Psoas muscle (tissue), 8 donors: ENCODE measurements at regions of chr10 and their contacts with region 1.

Region 1: GRCh38 chr10:52050429-52051047 is 263.5 kb upstream of the DKK1 start:
- DNase-seq: no peak
- ATAC-seq: peak in 3 of 4 donors; percentile 27 to 42 (median 30)
- H3K4me3 ChIP-seq: no peak overlapping the region
- H3K27ac ChIP-seq: no peak overlapping the region
- H3K4me1 ChIP-seq: peaks cover 16% of the 10 kb centered on the region
- H3K27me3 ChIP-seq: no peaks in the 10 kb centered on the region
- CTCF ChIP-seq: no peak

Region 2: DNA sequence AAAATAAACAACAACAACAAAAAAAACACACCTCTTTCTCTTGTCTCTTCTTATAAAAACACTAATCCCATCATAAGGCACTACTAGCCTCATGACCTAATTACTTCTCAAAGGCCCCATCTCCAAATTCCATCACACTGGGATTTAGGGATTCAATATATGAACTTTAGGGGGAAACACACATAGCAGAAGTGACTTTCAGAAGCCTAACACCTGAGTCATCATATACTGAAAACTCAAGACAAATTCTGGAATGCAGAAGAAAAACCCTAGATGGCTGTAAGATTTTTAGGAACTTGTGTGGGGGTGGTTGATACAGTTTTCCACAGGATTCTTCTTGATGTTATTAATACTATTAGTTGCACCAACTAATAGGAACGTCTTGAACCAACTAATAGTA is 317.5 kb before region 1 on chr10:
- intact Hi-C with region 1: no loop called
- DNase-seq: no peak
- ATAC-seq: no peak
- H3K4me3 ChIP-seq: no peak overlapping the region
- H3K27ac ChIP-seq: no peak overlapping the region
- H3K4me1 ChIP-seq: no peaks in the 10 kb centered on the region
- H3K27me3 ChIP-seq: no peaks in the 10 kb centered on the region
- CTCF ChIP-seq: no peak

Region 3: DNA sequence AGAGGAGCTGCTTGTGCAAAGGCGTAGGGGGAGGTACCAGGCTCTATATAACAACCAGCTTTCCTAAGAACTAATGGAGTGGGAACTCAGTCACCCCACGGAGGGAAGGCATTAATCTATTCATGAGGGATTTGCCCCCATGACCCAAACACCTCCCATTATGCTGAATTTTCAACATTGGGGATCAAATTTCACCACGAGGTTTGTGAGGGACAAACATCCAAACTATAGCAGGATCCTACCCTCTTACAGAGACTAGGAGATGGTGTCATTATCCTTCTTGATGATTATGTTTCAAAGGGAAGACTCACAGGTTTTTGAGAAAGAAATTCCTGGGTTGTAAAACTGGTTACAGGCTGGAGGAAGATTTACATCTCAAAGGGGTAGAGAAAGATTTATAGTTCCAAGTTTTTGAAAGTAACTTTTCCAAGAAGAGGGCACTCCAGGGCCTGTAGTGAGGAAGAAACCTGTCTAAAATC is 31.4 kb before region 1 on chr10:
- intact Hi-C with region 1: loop called in 1 of 2 experiments (anchors 1 kb)
- DNase-seq: no peak
- ATAC-seq: no peak
- H3K4me3 ChIP-seq: no peak overlapping the region
- H3K27ac ChIP-seq: no peak overlapping the region
- H3K4me1 ChIP-seq: no peaks in the 10 kb centered on the region
- H3K27me3 ChIP-seq: no peaks in the 10 kb centered on the region
- CTCF ChIP-seq: no peak